Heart right ventricle (tissue), 16 donors: ENCODE measurements at regions of chr2 and their contacts with region 1.

Region 1: GRCh38 chr2:75344146-75344545 is 144.8 kb upstream of the TACR1 start:
- DNase-seq: no peak
- ATAC-seq: no peak
- H3K4me3 ChIP-seq: no peak overlapping the region
- H3K27ac ChIP-seq: no peak overlapping the region
- H3K4me1 ChIP-seq: no peaks in the 10 kb centered on the region
- H3K27me3 ChIP-seq: peaks cover 0 to 3% (median 0%) of the 10 kb centered on the region in 7 donors
- CTCF ChIP-seq: no peak

Region 2: GRCh38 chr2:75375646-75376582 is 31.8 kb after region 1 on chr2:
- intact Hi-C with region 1: loop called in 1 of 10 experiments (anchors 2 kb)
- DNase-seq: no peak
- ATAC-seq: no peak
- H3K4me3 ChIP-seq: no peak overlapping the region
- H3K27ac ChIP-seq: no peak overlapping the region
- H3K4me1 ChIP-seq: no peaks in the 10 kb centered on the region
- H3K27me3 ChIP-seq: peaks cover 0 to 15% (median 0%) of the 10 kb centered on the region in 7 donors
- CTCF ChIP-seq: no peak